Activated CD4-positive, alpha-beta memory T cell treated with anti-CD3 and anti-CD28 coated beads for 36 hours (primary cell): ENCODE measurements at regions of chr6 and their contacts with region 1.

Region 1: GRCh38 chr6:137313928-137314855 is 95.0 kb upstream of the IFNGR1 start:
- DNase-seq: peak; percentile 80
- H3K4me3 Mint-ChIP-seq: no peak overlapping the region
- H3K27ac Mint-ChIP-seq: no peak overlapping the region
- H3K4me1 Mint-ChIP-seq: no peaks in the 10 kb centered on the region
- H3K27me3 Mint-ChIP-seq: no peaks in the 10 kb centered on the region

Region 2: GRCh38 chr6:136737871-136738691 is 576.1 kb before region 1 on chr6:
- CTCF ChIA-PET with region 1: no interaction called
- POLR2A ChIA-PET with region 1: no interaction called
- intact Hi-C with region 1: no loop called
- DNase-seq: no peak
- H3K4me3 Mint-ChIP-seq: no peak overlapping the region
- H3K27ac Mint-ChIP-seq: no peak overlapping the region
- H3K4me1 Mint-ChIP-seq: peaks cover 29% of the 10 kb centered on the region
- H3K27me3 Mint-ChIP-seq: no peaks in the 10 kb centered on the region

Region 3: GRCh38 chr6:137076277-137077068 is 237.7 kb before region 1 on chr6:
- CTCF ChIA-PET with region 1: interaction called, 21 read pairs
- POLR2A ChIA-PET with region 1: no interaction called
- intact Hi-C with region 1: loop called (anchors 1 kb)
- DNase-seq: peak; percentile 76
- H3K4me3 Mint-ChIP-seq: no peak overlapping the region
- H3K27ac Mint-ChIP-seq: no peak overlapping the region
- H3K4me1 Mint-ChIP-seq: no peaks in the 10 kb centered on the region
- H3K27me3 Mint-ChIP-seq: peaks cover 17% of the 10 kb centered on the region

Region 4: GRCh38 chr6:137102851-137103492 is 211.2 kb before region 1 on chr6:
- CTCF ChIA-PET with region 1: interaction called, 11 read pairs
- POLR2A ChIA-PET with region 1: no interaction called
- intact Hi-C with region 1: no loop called
- DNase-seq: peak; percentile 42
- H3K4me3 Mint-ChIP-seq: no peak overlapping the region
- H3K27ac Mint-ChIP-seq: peak overlapping the region; percentile 67
- H3K4me1 Mint-ChIP-seq: peaks cover 31% of the 10 kb centered on the region
- H3K27me3 Mint-ChIP-seq: no peaks in the 10 kb centered on the region

Region 5: DNA sequence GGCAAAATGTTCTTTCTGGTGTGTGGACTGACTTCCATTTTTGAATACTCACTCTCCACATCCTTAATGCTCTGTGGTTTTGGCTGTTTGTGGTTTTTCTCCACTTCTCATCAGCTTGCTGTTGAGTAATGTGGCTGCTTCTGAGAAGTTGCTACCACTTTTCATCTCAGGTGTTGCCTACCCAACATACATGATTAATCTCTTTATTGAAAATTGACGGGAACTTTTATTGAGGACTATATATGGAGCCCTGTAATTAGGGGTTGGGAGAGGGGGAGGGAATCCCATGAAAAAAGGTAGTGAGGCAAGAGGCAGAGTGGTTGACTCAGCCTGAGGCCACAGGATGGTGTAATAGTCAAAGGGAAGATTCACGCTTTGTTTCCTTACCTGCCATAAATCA is 158.4 kb before region 1 on chr6:
- CTCF ChIA-PET with region 1: no interaction called
- POLR2A ChIA-PET with region 1: no interaction called
- intact Hi-C with region 1: loop called (anchors 5 kb)
- DNase-seq: peak; percentile 50
- H3K4me3 Mint-ChIP-seq: no peak overlapping the region
- H3K27ac Mint-ChIP-seq: peak overlapping the region; percentile 49
- H3K4me1 Mint-ChIP-seq: peaks cover 16% of the 10 kb centered on the region
- H3K27me3 Mint-ChIP-seq: peaks cover 11% of the 10 kb centered on the region

Region 6: GRCh38 chr6:137283940-137284810 is 30.0 kb before region 1 on chr6:
- CTCF ChIA-PET with region 1: interaction called, 10 read pairs
- POLR2A ChIA-PET with region 1: no interaction called
- intact Hi-C with region 1: no loop called
- DNase-seq: no peak
- H3K4me3 Mint-ChIP-seq: no peak overlapping the region
- H3K27ac Mint-ChIP-seq: no peak overlapping the region
- H3K4me1 Mint-ChIP-seq: peaks cover 6% of the 10 kb centered on the region
- H3K27me3 Mint-ChIP-seq: peaks cover 16% of the 10 kb centered on the region

Region 7: GRCh38 chr6:137303441-137303840 is 10.8 kb before region 1 on chr6:
- CTCF ChIA-PET with region 1: interaction called, 14 read pairs
- POLR2A ChIA-PET with region 1: no interaction called
- intact Hi-C with region 1: no loop called
- DNase-seq: no peak
- H3K4me3 Mint-ChIP-seq: no peak overlapping the region
- H3K27ac Mint-ChIP-seq: no peak overlapping the region
- H3K4me1 Mint-ChIP-seq: no peaks in the 10 kb centered on the region
- H3K27me3 Mint-ChIP-seq: no peaks in the 10 kb centered on the region